Mammary epithelial cell (primary cell): ENCODE measurements at regions of chr12 and their contacts with region 1.

Region 1: DNA sequence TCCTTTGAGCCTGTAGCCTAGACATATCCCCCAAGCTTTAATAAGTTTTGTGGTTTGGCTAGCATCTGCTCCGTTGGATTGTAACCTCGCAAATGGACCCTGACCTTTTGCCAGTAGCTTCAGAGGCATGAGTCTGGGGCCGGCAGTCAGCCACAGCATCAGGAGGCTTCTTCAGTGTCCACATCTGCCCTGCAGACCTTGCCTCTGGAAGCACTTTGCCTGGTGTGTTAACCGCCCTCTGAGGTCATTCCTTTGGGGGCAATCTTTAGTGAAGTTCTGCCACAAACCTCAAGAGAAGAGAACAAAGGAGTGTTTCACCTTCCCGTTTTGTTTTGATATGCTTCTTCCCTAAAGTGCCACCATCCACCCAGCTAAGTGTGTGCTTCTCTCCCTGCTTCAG is 71.4 kb downstream of the GNS start:
- DNase-seq: no peak
- H3K4me3 ChIP-seq: no peak overlapping the region
- H3K27ac ChIP-seq: no peak overlapping the region
- H3K4me1 ChIP-seq: no peaks in the 10 kb centered on the region
- H3K27me3 ChIP-seq: no peaks in the 10 kb centered on the region
- CTCF ChIP-seq: no peak

Region 2: GRCh38 chr12:64600189-64600588 is 87.6 kb before region 1 on chr12:
- CTCF ChIA-PET with region 1: no interaction called
- dilution Hi-C with region 1: loop called (anchors 5 kb)
- in situ Hi-C with region 1: no loop called
- intact Hi-C with region 1: no loop called
- DNase-seq: no peak
- H3K4me3 ChIP-seq: no peak overlapping the region
- H3K27ac ChIP-seq: no peak overlapping the region
- H3K4me1 ChIP-seq: no peaks in the 10 kb centered on the region
- H3K27me3 ChIP-seq: no peaks in the 10 kb centered on the region
- CTCF ChIP-seq: no peak

Region 3: DNA sequence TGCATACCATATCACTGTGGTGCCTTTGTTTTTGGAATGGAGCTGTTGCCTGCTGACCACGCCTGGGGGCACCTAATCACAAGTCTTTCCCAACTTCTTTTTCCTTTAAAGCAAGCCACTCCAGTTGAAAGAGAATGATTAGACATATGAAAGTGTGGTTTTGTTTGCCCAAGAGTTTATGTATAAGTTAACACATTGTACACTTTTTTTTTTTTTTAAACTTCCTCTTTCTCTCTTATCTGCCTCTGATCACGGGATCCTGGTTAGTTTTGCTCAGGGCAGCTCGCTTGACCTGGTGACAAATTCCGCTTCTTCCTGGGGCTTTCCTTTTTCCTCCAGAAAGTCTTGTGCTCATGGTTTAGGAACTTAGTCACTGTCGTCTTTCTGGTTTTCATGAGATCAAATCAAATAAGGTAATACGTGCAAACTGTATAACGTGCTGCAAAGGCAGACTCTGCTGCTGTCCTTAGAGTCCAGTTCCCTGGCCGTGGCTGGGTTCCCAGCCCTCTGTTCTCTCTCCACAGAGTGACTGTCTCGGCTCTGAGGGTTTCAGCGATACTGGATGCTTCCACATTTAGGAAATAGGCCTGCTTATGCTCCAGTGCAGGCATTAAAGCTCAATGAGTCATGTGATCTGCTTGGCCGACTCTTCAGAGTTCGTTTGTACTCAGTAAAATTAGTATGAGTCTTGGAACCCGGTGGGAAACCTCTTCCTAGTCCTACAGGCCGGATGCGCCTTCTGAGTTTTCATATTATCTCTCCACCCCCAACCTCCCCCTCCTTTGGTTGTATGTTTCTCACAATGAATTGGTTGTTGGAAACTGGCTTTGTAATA is 62.4 kb before region 1 on chr12:
- CTCF ChIA-PET with region 1: no interaction called
- dilution Hi-C with region 1: no loop called
- in situ Hi-C with region 1: no loop called
- intact Hi-C with region 1: no loop called
- DNase-seq: peak; percentile 95
- H3K4me3 ChIP-seq: peak overlapping the region; percentile 42 to 53 (median 52)
- H3K27ac ChIP-seq: peak overlapping the region; percentile 98
- H3K4me1 ChIP-seq: peaks cover 16% of the 10 kb centered on the region
- H3K27me3 ChIP-seq: no peaks in the 10 kb centered on the region
- CTCF ChIP-seq: no peak

Region 4: GRCh38 chr12:64636856-64637255 is 51.0 kb before region 1 on chr12:
- CTCF ChIA-PET with region 1: no interaction called
- dilution Hi-C with region 1: no loop called
- in situ Hi-C with region 1: no loop called
- intact Hi-C with region 1: no loop called
- DNase-seq: no peak
- H3K4me3 ChIP-seq: no peak overlapping the region
- H3K27ac ChIP-seq: no peak overlapping the region
- H3K4me1 ChIP-seq: peaks cover 15% of the 10 kb centered on the region
- H3K27me3 ChIP-seq: no peaks in the 10 kb centered on the region
- CTCF ChIP-seq: no peak

Region 5: GRCh38 chr12:64916411-64917261 is 228.8 kb after region 1 on chr12:
- CTCF ChIA-PET with region 1: no interaction called
- dilution Hi-C with region 1: no loop called
- in situ Hi-C with region 1: no loop called
- intact Hi-C with region 1: no loop called
- DNase-seq: no peak
- H3K4me3 ChIP-seq: no peak overlapping the region
- H3K27ac ChIP-seq: no peak overlapping the region
- H3K4me1 ChIP-seq: no peaks in the 10 kb centered on the region
- H3K27me3 ChIP-seq: peaks cover 6% of the 10 kb centered on the region
- CTCF ChIP-seq: no peak